ENCODE measurements at regions of chr10 and their contacts with region 1.

Region 1: DNA sequence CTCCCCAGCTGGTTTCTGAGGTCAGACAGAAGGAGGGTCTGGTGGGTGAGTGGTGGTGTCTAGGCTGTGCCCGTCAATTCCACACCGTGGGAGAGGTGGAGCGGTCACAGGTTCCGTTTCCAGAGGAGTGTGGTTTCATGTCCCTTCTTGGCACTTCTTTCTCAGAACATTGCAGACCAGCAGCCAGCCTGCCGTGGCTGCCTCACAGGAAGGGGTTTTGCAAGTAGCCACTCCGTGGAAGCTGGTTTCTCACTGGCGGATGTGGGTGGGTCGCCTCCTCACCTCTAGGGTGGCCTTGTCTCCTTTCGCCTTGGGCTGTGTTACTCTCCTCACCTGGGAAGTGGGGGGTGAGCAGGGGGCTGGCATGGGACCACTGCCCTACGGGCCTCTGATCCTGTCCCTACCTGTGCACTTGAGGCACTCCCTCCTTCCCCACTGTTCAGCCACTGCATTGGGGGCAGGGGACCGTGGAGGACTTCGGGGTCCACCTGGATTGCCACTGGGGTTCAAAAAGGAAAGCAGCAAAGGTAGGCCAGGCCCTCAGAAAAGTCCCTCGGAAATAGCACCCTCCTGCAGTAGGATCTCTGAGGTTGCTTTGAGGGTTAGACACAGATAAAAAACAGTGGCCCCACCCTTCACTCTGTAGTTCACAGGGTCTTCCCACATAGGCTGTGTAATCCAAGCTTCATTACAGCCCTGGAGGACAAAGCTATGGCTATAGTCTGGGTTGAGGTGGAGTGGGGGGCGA is 33.9 kb downstream of the TSPAN14 start:
- DNase-seq: peak; percentile 71 to 81 (median 76)
- H3K4me3 ChIP-seq: peak overlapping the region; percentile 4 to 53
- H3K4me3 Mint-ChIP-seq: peak overlapping the region; percentile 70 to 93 (median 83)
- H3K27ac ChIP-seq: peak overlapping the region; percentile 74
- H3K27ac Mint-ChIP-seq: peak overlapping the region; percentile 83 to 97 (median 97)
- H3K4me1 ChIP-seq: peaks cover 100% of the 10 kb centered on the region
- H3K4me1 Mint-ChIP-seq: peaks cover 86 to 100% (median 93%) of the 10 kb centered on the region in 4 donors
- H3K27me3 ChIP-seq: no peaks in the 10 kb centered on the region
- H3K27me3 Mint-ChIP-seq: no peaks in the 10 kb centered on the region

Region 2: GRCh38 chr10:80421707-80422536 is 66.0 kb before region 1 on chr10:
- CTCF ChIA-PET with region 1: no interaction called
- POLR2A ChIA-PET with region 1: no interaction called
- intact Hi-C with region 1: no loop called
- DNase-seq: no peak
- H3K4me3 ChIP-seq: no peak overlapping the region
- H3K4me3 Mint-ChIP-seq: no peak overlapping the region
- H3K27ac ChIP-seq: no peak overlapping the region
- H3K27ac Mint-ChIP-seq: no peak overlapping the region
- H3K4me1 ChIP-seq: no peaks in the 10 kb centered on the region
- H3K4me1 Mint-ChIP-seq: no peaks in the 10 kb centered on the region
- H3K27me3 ChIP-seq: no peaks in the 10 kb centered on the region
- H3K27me3 Mint-ChIP-seq: no peaks in the 10 kb centered on the region

Region 3: DNA sequence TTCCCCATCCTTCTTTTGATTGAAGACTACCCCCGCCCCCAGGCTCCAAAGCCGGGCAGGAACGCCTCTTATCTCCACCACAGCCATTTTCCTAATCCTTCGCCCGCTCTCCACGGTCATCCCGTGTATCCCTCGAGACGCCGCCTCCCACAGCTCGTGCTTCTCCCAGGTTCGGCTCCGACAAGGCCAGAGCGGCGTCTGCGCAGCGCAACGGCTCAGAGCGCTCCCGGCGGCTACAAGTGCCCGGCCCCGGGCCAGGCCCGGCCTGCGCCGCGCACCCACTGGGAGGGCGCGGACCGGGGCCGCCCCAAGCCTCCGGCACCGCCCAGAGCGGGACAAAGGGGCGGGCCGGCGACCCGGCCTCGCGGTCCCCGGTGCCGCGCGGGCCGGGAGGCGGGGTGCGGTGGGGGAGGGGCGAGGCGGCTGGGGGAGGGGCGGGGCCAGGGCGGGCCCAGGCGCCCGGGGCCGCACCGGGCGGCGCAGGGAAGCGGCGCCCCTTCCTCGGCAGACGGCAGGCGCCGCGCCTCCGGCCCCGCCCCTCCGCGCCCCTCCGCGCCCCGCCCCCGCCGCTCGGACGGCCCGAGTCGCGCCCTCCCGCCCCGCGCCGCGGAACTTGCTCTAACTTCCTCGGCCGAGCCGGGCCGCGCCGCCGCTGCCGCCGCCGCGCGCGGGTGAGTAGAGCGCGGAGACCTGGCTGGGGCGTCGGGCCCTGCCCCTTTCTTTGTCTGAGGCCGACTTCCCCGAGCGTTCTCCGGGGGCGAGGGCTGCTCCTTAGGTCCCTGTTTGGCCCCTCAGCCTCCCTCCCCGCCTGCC is 34.1 kb before region 1 on chr10 and contains the start of gene TSPAN14:
- CTCF ChIA-PET with region 1: interaction called, 118 read pairs
- POLR2A ChIA-PET with region 1: interaction called, 906 read pairs
- intact Hi-C with region 1: loop called (anchors 1 kb)
- DNase-seq: peak; percentile 66 to 76 (median 73)
- H3K4me3 ChIP-seq: peak within 1 kb of the TSS; percentile 70 to 76
- H3K4me3 Mint-ChIP-seq: peak within 1 kb of the TSS; percentile 90 to 100 (median 98)
- H3K27ac ChIP-seq: peak within 1 kb of the TSS; percentile 83
- H3K27ac Mint-ChIP-seq: peak within 1 kb of the TSS; percentile 93 to 100 (median 96)
- H3K4me1 ChIP-seq: peaks cover 31% of the 10 kb centered on the region
- H3K4me1 Mint-ChIP-seq: peaks cover 29 to 53% (median 35%) of the 10 kb centered on the region in 4 donors
- H3K27me3 ChIP-seq: no peaks in the 10 kb centered on the region
- H3K27me3 Mint-ChIP-seq: no peaks in the 10 kb centered on the region
- total RNA-seq, gene TSPAN14: 151 to 153 TPM

Region 4: DNA sequence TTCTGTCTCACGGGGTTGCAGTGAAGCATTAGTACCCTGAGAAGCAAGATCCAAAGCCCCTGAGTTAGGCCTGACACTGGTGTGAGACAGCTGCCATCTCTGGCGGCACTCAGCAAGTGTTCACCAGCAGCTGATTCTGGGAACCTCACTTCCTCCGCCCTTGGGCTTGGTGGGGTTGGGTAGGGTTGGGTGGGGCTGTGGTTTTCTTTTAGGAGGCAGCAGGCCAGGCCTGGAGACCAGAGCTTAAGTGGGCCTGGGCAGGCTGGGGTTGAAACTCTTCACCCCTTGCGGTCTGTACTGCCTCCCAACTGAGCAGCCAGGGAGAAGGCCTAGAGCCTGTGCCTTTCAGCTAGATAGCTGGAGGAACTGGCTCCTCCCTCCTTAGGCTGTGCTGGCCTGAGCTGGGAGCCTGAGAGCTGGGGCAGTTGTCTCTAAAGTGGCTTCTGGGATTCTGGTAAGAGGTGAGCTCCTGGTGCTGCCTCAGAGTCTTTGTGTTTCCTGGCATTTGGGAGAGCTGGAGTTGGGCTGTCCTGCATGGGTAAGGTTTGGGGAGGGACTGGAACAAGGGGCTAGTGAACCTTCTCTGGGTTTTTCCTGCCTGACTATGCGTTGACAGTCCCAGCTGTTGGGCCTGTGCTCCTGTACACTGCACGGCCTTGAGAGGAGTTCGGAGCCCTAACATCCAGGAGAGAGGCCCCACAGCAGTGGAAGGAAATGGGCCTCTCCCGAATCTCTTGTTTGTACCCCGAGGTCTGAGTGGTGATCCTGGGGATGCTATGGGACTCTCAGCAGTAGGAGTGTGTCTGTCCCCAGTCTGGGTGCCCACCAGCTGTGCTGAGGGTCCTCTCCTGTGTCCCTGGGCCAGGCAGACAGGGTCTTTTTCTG is 28.7 kb before region 1 on chr10:
- CTCF ChIA-PET with region 1: interaction called, 118 read pairs
- POLR2A ChIA-PET with region 1: interaction called, 906 read pairs
- intact Hi-C with region 1: loop called (anchors 1 kb)
- DNase-seq: peak; percentile 51 to 83 (median 66)
- H3K4me3 ChIP-seq: peak overlapping the region; percentile 67 to 76
- H3K4me3 Mint-ChIP-seq: peak overlapping the region; percentile 90 to 100 (median 98)
- H3K27ac ChIP-seq: peak overlapping the region; percentile 83
- H3K27ac Mint-ChIP-seq: peak overlapping the region; percentile 88 to 100 (median 96)
- H3K4me1 ChIP-seq: peaks cover 84% of the 10 kb centered on the region
- H3K4me1 Mint-ChIP-seq: peaks cover 71 to 93% (median 79%) of the 10 kb centered on the region in 4 donors
- H3K27me3 ChIP-seq: no peaks in the 10 kb centered on the region
- H3K27me3 Mint-ChIP-seq: no peaks in the 10 kb centered on the region

Region 5: DNA sequence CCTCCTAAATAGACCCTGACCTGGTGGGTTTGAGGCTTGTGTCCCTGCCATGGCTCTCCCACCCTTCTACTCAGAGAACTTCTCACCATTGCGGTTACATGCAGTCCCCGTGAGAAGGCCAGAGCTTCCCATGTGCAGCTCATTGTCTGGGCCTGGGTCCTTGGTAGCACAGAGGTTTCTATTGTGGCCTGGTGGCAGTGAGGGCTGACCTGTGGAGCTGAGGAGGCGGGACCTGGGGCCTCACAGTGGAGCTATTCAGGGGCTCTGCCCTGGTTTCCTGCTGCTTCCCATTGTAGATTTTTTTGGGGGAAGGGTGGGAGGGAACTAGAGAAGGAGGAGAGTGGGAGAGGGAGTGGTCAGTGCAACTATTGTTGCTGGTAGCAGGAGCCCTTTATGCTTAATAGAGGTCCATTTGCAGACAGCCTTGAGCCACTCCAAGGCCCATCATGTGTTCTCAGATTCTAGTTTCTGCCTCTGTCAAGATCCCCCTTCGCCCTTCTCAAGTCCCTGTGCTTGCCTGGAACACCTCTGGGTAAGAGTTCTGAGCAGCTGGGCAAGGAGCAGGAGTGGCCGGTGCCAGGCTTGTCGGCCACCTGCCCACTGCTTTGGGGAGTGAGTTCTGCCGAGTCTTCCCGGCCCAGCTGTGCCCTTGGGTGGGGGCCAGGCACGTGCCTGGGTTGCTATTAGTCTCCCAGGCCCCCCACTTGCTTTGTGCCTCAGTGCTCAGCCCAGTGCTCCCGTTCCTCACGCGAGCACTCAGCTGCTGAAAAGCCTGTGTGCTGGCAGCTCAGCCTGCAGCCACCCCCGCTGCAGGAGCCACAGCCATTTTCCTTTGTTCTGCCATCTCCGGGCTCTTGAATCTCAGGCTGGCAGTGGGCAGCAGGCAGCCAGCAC is 23.2 kb before region 1 on chr10:
- CTCF ChIA-PET with region 1: interaction called, 118 read pairs
- POLR2A ChIA-PET with region 1: interaction called, 906 read pairs
- intact Hi-C with region 1: loop called (anchors 1 kb)
- DNase-seq: no peak
- H3K4me3 ChIP-seq: peak overlapping the region; percentile 48 to 58
- H3K4me3 Mint-ChIP-seq: peak overlapping the region; percentile 83 to 100 (median 96)
- H3K27ac ChIP-seq: peak overlapping the region; percentile 83
- H3K27ac Mint-ChIP-seq: peak overlapping the region; percentile 93 to 100 (median 96)
- H3K4me1 ChIP-seq: peaks cover 100% of the 10 kb centered on the region
- H3K4me1 Mint-ChIP-seq: peaks cover 79 to 100% (median 93%) of the 10 kb centered on the region in 4 donors
- H3K27me3 ChIP-seq: no peaks in the 10 kb centered on the region
- H3K27me3 Mint-ChIP-seq: no peaks in the 10 kb centered on the region

Region 6: GRCh38 chr10:80472234-80473095 is 15.5 kb before region 1 on chr10:
- CTCF ChIA-PET with region 1: interaction called, 118 read pairs
- POLR2A ChIA-PET with region 1: interaction called, 906 read pairs
- intact Hi-C with region 1: loop called (anchors 1 kb)
- DNase-seq: peak in 2 of 5 donors; percentile 51 to 83
- H3K4me3 ChIP-seq: peak overlapping the region in 1 of 2 donors; percentile 29
- H3K4me3 Mint-ChIP-seq: peak overlapping the region; percentile 32 to 97 (median 73)
- H3K27ac ChIP-seq: peak overlapping the region; percentile 69
- H3K27ac Mint-ChIP-seq: peak overlapping the region; percentile 88 to 96 (median 94)
- H3K4me1 ChIP-seq: peaks cover 100% of the 10 kb centered on the region
- H3K4me1 Mint-ChIP-seq: peaks cover 65 to 94% (median 83%) of the 10 kb centered on the region in 4 donors
- H3K27me3 ChIP-seq: no peaks in the 10 kb centered on the region
- H3K27me3 Mint-ChIP-seq: no peaks in the 10 kb centered on the region

Region 7: GRCh38 chr10:80498833-80499741 is 11.1 kb after region 1 on chr10:
- CTCF ChIA-PET with region 1: interaction called, 201 read pairs
- POLR2A ChIA-PET with region 1: interaction called, 202 read pairs
- intact Hi-C with region 1: loop called (anchors 1 kb)
- DNase-seq: peak in 1 of 5 donors; percentile 74
- H3K4me3 ChIP-seq: peak overlapping the region; percentile 1 to 22
- H3K4me3 Mint-ChIP-seq: peak overlapping the region; percentile 48 to 92 (median 81)
- H3K27ac ChIP-seq: peak overlapping the region; percentile 62
- H3K27ac Mint-ChIP-seq: peak overlapping the region; percentile 83 to 97 (median 95)
- H3K4me1 ChIP-seq: peaks cover 100% of the 10 kb centered on the region
- H3K4me1 Mint-ChIP-seq: peaks cover 90 to 100% (median 95%) of the 10 kb centered on the region in 4 donors
- H3K27me3 ChIP-seq: no peaks in the 10 kb centered on the region
- H3K27me3 Mint-ChIP-seq: no peaks in the 10 kb centered on the region